BJ (cell line): ENCODE measurements at regions of chr6 and their contacts with region 1.

Region 1: GRCh38 chr6:114040871-114041270 is 69.9 kb upstream of the HDAC2 start:
- DNase-seq: no peak
- H3K4me3 ChIP-seq: no peak overlapping the region
- H3K27me3 ChIP-seq: no peaks in the 10 kb centered on the region
- CTCF ChIP-seq: no peak

Region 2: DNA sequence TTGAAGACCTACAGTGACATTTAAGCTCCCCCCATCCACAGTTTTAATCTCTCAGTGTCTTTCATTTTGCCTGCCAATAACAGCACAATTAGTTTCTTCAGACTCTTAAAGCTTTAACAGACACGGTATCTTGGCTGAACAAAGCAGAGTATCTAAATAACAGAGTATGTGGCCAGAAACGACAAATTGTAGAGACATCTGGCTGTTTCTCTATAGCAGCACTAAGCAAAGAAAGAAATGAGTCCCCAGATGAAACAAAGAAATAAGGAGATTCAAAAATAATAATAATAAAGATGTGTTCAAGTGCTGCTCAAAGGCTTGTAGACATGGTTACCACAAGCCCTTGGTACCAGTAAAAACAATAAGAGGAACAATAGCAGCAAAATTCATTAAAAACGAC is 27.9 kb after region 1 on chr6:
- CTCF ChIA-PET with region 1: interaction called, 3 read pairs
- POLR2A ChIA-PET with region 1: interaction called, 11 read pairs
- DNase-seq: no peak
- H3K4me3 ChIP-seq: no peak overlapping the region
- H3K27me3 ChIP-seq: no peaks in the 10 kb centered on the region
- CTCF ChIP-seq: no peak